ENCODE measurements at regions of chr1 and their contacts with region 1.

Region 1: DNA sequence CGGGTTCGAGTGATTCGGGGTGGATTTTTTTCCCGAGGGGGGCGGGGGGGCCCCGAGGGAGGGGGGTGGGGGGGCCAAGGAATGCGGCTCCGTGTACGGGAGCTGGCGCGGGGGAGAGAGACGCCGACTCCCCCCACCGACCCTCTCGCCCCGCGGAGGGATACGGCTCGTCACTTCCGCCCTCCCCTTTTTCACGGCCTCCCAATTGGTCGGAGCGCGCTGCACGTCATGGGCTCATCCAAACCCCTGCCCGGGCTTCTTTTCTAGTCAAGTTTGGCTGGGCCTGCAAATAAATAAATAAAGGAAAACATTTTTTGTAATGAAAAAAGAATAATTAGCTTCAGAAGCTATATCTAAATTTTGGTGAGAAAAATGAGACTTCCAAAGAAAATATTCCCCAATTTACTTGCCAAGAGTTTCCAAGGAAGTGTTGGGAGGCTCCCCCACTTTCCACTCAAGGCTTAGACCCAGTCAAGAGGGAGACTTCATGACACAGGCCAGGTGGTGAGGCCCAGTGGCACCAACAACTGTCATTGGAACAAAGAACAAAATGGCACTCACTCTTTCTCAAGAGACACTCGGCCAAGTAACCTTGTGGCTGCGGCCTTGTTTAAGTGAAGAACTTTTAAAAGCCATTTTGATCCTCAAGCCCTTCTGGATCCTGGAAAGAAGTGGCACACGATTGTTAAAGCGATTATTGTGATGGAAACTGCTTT is at the start of gene POGZ:
- DNase-seq: peak; percentile 97
- ATAC-seq: peak; percentile 80
- H3K4me3 Mint-ChIP-seq: peak within 1 kb of the TSS; percentile 83
- H3K27ac Mint-ChIP-seq: peak within 1 kb of the TSS; percentile 94
- H3K4me1 Mint-ChIP-seq: peaks cover 24% of the 10 kb centered on the region
- H3K27me3 Mint-ChIP-seq: peaks cover 19% of the 10 kb centered on the region
- total RNA-seq, gene POGZ: 81.3 to 104 TPM

Region 2: DNA sequence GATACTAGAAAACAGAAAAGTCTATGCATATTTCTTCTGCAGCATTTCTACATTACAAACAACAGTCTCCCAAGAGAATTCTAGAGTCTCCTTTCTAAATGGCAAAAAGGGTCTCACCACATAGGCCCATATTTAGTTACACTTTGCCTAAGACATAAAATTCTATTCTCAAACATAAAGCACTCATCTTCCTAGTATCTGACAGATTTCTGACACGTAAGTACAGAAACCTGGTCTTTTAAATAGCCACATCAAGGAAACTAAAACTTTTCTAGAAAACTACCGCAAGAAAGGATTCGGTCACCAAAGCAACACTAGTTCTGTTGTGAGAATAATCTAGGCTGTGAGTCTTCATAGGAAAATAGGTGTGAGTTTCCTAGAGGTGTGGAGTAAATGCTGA is 617.9 kb before region 1 on chr1:
- CTCF ChIA-PET with region 1: no interaction called
- POLR2A ChIA-PET with region 1: no interaction called
- intact Hi-C with region 1: no loop called
- DNase-seq: no peak
- ATAC-seq: peak; percentile 91
- H3K4me3 Mint-ChIP-seq: peak overlapping the region; percentile 2
- H3K27ac Mint-ChIP-seq: peak overlapping the region; percentile 21
- H3K4me1 Mint-ChIP-seq: peaks cover 33% of the 10 kb centered on the region
- H3K27me3 Mint-ChIP-seq: no peaks in the 10 kb centered on the region

Region 3: GRCh38 chr1:151399890-151400495 is 59.5 kb before region 1 on chr1:
- CTCF ChIA-PET with region 1: no interaction called
- POLR2A ChIA-PET with region 1: no interaction called
- intact Hi-C with region 1: loop called (anchors 2 kb)
- DNase-seq: peak; percentile 43
- ATAC-seq: peak; percentile 21
- H3K4me3 Mint-ChIP-seq: peak overlapping the region; percentile 88
- H3K27ac Mint-ChIP-seq: peak overlapping the region; percentile 99
- H3K4me1 Mint-ChIP-seq: peaks cover 29% of the 10 kb centered on the region
- H3K27me3 Mint-ChIP-seq: no peaks in the 10 kb centered on the region

Region 4: DNA sequence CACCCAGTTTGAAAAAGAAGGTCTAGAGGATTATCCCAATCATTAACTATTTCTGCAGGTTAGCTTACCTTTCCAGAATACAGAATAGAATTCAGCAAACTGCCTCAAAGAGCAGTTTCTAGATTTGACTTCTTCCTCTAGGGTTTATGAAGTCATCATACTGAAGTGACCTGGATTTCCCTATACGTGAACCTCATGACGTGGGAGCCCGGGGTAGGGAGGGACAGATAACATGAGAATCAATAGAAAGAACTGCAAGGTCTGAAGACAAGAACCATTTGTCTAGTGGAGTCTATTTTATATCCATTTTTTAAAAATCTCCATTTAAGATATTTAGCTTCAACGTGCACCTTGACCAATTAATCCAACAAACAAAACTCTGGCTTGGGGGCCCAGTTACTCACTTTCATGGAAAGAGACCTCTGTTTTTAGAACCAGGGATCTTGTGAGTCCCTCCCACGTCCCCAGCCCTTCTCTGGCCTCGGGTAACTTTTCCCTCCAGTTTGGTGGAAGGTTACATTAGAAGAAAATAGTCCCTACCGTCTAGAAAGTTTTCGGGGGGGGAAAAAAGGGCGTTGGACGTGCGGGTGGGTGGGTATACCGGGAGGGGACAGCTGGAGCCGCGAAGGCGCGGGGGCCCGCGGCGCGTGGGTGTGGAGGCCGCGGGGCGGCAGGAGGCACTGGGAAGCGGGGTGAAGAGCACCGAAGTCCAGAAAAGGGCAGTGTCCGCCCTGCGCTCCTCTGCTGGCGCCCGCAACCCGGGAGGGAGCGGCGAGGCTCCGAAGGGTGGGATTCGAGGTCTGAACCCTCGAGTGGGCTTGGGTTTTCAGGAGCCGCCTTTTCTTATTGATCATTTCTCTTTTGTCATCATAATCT is 13.6 kb after region 1 on chr1:
- CTCF ChIA-PET with region 1: interaction called, 9 read pairs
- POLR2A ChIA-PET with region 1: interaction called, 7 read pairs
- intact Hi-C with region 1: loop called (anchors 1 kb)
- DNase-seq: peak; percentile 52
- ATAC-seq: no peak
- H3K4me3 Mint-ChIP-seq: peak overlapping the region; percentile 42
- H3K27ac Mint-ChIP-seq: peak overlapping the region; percentile 59
- H3K4me1 Mint-ChIP-seq: peaks cover 24% of the 10 kb centered on the region
- H3K27me3 Mint-ChIP-seq: peaks cover 3% of the 10 kb centered on the region

Region 5: DNA sequence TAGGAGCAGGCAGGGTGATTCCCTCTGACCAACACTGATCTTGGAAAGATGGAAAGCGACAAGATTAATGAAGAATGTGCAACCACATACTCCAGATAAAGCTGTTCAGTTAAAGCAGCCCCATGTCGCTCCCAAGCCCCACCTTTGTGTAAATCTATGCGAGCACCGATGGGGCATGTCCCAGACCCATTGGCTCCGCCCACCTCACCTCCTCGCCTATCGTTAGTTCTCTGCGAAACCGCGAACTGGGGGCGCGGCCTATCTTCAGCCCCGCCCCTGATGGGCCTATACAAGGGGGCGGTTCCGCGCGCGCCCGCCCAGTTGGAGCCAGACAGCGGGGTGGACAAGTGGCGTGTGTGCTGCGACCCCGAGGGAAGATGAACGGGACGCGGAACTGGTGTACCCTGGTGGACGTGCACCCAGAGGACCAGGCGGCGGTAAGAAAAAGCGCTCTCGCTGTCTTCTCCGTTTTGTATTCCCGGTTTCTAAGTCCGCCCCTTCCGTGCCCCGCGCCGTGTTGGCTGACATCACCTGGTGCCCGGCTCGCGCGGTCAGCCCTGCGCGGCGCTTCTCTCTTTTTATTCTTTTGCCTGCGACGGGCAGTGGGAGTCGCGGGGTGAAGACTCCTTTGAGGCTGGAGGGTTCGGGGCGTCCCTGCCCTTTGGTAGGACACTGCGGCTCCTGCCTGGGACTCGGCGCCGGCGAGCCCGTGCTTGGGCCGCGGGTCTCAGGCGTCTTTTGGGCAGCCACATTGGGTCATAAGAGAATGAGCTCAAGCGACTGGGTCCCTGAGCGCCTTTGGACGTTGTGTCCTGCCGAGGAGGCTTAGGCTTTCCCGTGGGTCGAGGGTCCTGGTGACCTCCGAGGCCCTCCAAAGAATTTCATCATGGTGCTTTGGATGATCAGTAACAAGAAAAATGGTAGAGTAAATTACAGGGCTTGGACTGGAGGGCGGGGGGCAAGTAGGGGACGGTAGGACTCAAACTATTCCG is 80.8 kb after region 1 on chr1 and contains the start of gene TUFT1:
- CTCF ChIA-PET with region 1: no interaction called
- POLR2A ChIA-PET with region 1: no interaction called
- intact Hi-C with region 1: loop called in 1 of 2 experiments (anchors 1 kb)
- DNase-seq: peak; percentile 97
- ATAC-seq: peak; percentile 99
- H3K4me3 Mint-ChIP-seq: peak within 1 kb of the TSS; percentile 90
- H3K27ac Mint-ChIP-seq: peak within 1 kb of the TSS; percentile 69
- H3K4me1 Mint-ChIP-seq: peaks cover 21% of the 10 kb centered on the region
- H3K27me3 Mint-ChIP-seq: peaks cover 7% of the 10 kb centered on the region
- total RNA-seq, gene TUFT1: 3.2 TPM

Region 6: DNA sequence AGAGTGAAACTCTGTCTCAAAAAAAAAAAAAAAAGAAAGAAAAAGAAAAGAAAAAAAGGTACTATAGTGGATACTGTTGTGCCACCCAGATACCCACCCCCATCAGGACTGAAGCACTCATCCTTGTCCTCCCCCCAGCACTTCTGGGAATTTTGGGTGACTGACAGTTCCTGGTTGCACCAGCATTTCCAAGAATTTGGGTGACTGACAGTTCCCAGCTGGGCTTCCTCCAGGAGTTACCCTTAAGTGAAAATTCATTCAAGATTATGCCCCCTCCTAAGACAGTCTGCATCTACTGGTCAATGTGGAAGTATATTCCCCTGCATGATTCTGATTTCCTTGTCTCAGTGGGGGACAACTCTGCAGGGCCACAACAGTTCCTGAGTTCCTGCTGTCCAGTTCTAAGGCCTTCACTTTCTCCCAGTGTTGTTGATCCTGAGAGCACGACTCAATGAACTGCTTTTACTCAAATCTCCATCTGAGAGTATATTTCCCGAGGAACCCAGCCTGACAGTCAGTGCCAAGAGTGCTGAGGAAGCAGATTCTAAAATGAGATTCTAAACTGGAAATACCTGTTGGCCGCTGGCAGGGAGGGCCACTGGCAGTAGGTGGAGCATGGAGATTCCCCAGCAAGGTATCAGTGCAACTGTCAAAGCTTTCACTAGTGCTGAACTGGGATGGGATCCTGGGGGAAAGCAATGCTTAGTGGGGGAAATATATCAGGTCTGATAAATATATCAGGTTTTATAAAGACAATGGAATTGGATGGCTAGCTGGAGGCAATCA is 280.3 kb after region 1 on chr1:
- CTCF ChIA-PET with region 1: no interaction called
- POLR2A ChIA-PET with region 1: no interaction called
- intact Hi-C with region 1: no loop called
- DNase-seq: no peak
- ATAC-seq: no peak
- H3K4me3 Mint-ChIP-seq: no peak overlapping the region
- H3K27ac Mint-ChIP-seq: no peak overlapping the region
- H3K4me1 Mint-ChIP-seq: no peaks in the 10 kb centered on the region
- H3K27me3 Mint-ChIP-seq: peaks cover 1% of the 10 kb centered on the region

Region 7: DNA sequence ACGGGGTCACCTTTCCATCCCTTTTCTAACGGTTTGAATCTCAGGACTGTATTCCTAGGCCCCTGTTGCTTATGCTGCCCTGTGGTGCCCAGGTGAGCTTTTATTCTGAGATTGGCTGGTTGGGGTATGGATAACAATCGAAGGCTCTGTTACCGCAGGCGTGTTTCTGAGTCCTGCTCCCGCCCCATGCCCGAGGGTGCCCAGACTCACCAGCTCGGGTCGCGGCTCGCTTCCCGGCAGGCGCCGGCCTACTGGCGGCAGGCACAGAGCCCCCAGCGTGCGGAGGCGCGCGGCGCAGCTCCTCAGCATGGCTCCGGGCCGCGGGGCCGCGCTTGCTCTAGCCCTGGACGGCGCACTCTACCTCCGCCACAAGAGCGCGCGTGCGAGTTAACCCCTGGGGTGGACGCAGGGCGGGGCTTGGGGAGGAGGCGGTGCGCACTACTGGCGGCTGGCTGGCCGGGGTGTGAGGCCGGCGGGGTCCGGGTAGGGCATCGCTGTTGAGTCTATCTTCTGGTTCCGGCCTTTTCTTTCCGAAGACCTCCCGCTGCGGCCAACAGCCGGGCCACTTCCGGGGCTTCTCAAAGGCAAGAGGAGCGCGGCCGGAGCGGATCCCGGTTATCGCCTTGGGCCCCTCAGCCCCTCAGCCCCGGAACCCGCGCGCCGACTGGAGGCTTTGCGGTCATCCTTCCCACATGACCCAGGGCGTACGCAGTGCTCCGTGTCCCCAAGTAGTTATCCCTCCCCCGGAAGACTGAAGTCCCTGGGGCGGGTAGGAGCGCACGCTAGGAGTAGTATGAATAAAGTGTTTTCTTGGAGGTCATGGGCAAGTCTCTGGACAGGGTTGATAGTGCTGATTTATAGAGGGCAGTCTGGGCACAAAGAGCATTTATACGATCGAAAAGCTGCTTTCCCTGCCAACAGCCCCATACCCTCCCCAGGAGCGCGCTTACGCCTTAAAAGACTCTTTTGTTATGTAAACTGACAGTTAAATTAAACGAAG is 450.0 kb after region 1 on chr1 and contains the start of gene THEM4:
- CTCF ChIA-PET with region 1: no interaction called
- POLR2A ChIA-PET with region 1: no interaction called
- intact Hi-C with region 1: loop called in 1 of 2 experiments (anchors 5 kb)
- DNase-seq: peak; percentile 98
- ATAC-seq: peak; percentile 93
- H3K4me3 Mint-ChIP-seq: peak within 1 kb of the TSS; percentile 82
- H3K27ac Mint-ChIP-seq: peak within 1 kb of the TSS; percentile 91
- H3K4me1 Mint-ChIP-seq: peaks cover 42% of the 10 kb centered on the region
- H3K27me3 Mint-ChIP-seq: no peaks in the 10 kb centered on the region
- total RNA-seq, gene THEM4: 23.9 to 26.0 TPM